ENCODE measurements at regions of chr10 and their contacts with region 1.

Region 1: GRCh38 chr10:114526504-114527238 is 122.4 kb upstream of the AFAP1L2 start:
- DNase-seq: peak; percentile 88
- ATAC-seq: peak; percentile 99
- H3K4me3 ChIP-seq: peak overlapping the region; percentile 66 to 84 (median 73)
- H3K27ac ChIP-seq: peak overlapping the region; percentile 92
- H3K4me1 ChIP-seq: peaks cover 48% of the 10 kb centered on the region
- H3K27me3 ChIP-seq: no peaks in the 10 kb centered on the region; a peak in 1 of 5 replicates
- CTCF ChIP-seq: peak; percentile 17
- EP300 ChIP-seq: peak; percentile 35 to 37; a peak in 2 of 4 replicates
- POLR2A ChIP-seq: peak; percentile 91 to 98
- RAD21 ChIP-seq: no peak

Region 2: DNA sequence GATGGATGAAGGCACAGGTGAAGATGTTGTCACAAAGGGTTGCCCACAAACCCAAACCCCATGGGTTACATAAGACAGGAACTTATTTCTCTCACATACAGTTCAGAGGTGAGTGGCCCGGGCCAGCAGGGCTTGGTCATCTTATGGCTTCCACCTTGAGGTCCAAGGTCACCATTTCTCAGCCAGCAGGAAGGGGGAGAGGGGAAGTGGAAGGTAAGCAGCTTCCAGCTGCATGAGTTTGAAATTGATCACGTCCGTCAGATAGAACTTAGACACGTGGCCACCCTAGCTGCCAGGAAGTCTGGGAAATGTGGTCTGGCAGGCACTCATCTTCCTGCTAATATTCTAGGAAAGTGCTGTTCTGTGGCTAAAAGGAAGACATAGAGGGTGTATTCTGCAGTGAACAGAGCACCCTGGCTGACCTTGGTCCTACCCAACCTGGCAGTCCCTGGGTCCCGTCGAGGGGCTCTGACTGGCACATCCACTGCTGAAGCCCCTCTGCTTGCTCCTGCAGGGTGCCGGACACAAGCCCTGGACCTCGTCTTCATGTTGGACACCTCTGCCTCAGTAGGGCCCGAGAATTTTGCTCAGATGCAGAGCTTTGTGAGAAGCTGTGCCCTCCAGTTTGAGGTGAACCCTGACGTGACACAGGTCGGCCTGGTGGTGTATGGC is 238.1 kb before region 1 on chr10:
- CTCF ChIA-PET with region 1: no interaction called
- POLR2A ChIA-PET with region 1: no interaction called
- in situ Hi-C with region 1: no loop called
- intact Hi-C with region 1: no loop called
- DNase-seq: no peak
- ATAC-seq: no peak
- H3K4me3 ChIP-seq: no peak overlapping the region
- H3K27ac ChIP-seq: no peak overlapping the region
- H3K4me1 ChIP-seq: no peaks in the 10 kb centered on the region
- H3K27me3 ChIP-seq: peaks cover 1 to 24% of the 10 kb centered on the region in 2 experiments; a peak in 4 of 5 replicates
- CTCF ChIP-seq: no peak
- EP300 ChIP-seq: no peak
- POLR2A ChIP-seq: no peak
- RAD21 ChIP-seq: no peak

Region 3: DNA sequence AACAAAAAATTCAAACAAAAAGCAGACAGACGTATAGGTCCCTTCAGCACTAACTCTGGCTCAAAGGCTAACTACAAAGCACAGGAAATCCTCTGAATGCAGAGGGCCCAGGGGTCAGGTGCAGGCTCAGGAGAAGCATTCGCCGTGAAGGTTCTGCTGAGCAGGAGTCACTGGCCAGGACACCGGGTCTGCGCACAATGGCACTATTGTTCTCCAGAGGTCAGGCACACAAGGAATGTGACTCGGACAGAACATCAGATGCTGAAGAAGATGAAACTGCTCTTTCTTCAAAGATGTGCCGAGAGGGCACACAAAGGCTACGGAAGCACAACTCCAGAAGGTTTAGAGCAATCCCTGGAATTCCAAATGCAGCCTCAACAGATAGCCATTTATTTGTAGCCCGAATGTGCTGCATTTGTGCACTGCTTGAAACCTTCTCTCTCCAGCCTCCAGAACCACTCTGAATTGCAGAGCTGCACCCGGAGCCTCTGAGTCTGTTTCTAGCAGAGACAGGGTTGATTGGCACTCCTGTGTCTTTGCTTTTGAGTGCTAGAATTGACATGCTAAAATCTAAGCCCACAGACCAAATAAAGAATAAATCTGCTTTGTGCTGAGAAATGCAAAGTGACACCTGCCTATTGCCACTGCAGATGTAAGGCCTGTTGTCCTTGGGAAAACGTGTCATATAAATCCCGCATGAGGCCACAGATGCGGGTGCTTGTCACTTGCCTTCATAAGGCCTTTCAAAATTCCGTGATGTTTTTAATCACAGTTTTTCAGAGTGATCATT is 37.0 kb before region 1 on chr10:
- CTCF ChIA-PET with region 1: no interaction called
- POLR2A ChIA-PET with region 1: interaction called, 4 read pairs
- in situ Hi-C with region 1: no loop called
- intact Hi-C with region 1: loop called (anchors 1 kb)
- DNase-seq: peak; percentile 99
- ATAC-seq: peak; percentile 99
- H3K4me3 ChIP-seq: peak overlapping the region in 1 of 3 experiments; percentile 29; a peak in 1 of 6 replicates
- H3K27ac ChIP-seq: peak overlapping the region; percentile 91
- H3K4me1 ChIP-seq: peaks cover 72% of the 10 kb centered on the region
- H3K27me3 ChIP-seq: no peaks in the 10 kb centered on the region
- CTCF ChIP-seq: no peak
- EP300 ChIP-seq: peak; percentile 59 to 93
- POLR2A ChIP-seq: peak in 1 of 2 experiments; percentile 46; a peak in 2 of 4 replicates
- RAD21 ChIP-seq: no peak